Calu3 (cell line): ENCODE measurements at regions of chr9 and their contacts with region 1.

Region 1: DNA sequence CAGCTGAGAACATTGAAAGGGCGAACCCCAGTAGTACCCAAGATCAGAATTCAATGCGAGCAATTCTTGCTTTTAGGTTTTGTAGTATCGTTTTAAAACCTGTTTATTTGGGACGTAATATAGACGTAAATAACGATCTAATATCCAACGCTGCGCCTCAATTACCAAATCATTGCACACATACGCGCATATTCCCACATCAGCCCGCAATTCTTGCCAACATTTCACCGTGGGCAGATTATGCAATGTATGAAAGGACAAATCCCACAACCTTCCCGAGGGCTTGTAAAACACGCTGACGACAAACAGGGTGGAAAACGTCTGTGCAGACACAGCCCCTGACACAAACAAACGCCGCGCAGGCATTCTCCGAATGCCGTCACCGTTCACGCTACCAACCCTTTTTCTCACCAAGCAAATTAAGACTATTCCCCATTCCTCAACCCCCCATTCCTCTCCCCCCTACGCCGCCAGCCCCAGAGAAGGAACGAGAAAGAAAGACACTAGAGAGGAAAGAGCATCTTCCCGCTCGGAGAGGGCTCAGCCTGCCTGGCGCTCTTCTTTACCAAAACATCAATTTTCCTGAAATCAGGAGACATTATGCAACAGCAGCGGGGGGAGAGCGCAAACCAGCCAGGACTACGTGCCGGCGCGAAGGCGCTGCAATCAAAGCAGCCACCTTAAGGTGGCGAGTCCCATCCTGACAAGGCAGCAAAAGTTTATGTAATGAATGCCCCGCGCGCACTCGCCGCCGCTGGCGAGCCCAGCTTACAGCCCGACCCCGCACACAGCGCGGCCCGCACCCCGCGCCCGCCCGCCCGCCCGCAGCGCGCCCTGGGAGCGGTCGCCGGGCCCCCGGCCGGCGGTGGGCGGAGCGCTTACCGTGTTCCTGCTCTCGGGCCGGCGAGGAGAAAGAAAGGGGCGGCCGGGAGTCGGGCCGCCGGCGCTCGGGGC is 597 bp downstream of the NFIL3 start:
- DNase-seq: peak; percentile 61
- H3K4me3 Mint-ChIP-seq: peak overlapping the region; percentile 96
- H3K27ac Mint-ChIP-seq: peak overlapping the region; percentile 89
- H3K4me1 Mint-ChIP-seq: peaks cover 27% of the 10 kb centered on the region
- H3K27me3 Mint-ChIP-seq: no peaks in the 10 kb centered on the region
- CTCF ChIP-seq: no peak

Region 2: DNA sequence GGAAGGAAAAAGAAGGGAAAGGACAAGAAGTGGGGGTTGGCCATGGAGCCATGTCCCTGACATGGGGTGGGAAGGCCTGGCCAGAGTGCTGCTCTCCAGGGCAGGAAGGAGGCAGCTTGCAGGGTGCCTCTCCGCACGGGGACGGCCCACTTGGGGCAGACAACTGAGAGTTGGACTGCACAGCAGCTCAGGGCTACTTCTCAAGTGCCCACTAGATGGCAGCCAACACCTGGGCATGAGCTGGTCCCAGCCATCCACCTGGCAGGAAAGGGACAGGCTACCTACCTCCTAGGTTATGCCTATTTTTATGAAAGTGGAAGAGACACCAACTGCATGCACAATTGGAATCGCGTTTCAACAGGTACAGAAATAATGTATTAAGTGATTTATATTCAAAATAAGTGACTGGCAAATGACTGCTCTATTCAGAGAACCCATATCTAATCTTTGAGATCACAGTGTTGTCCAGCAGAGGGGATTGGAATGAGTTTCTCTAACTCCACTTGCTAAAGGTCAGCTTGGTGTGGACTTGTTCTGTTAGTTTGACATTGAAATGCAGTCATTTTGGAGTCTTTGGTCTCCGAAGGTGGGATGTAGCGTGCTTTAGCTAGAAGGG is 508.1 kb before region 1 on chr9:
- CTCF ChIA-PET with region 1: interaction called, 18 read pairs
- intact Hi-C with region 1: loop called (anchors 1 kb)
- DNase-seq: peak; percentile 74
- H3K4me3 Mint-ChIP-seq: no peak overlapping the region
- H3K27ac Mint-ChIP-seq: no peak overlapping the region
- H3K4me1 Mint-ChIP-seq: no peaks in the 10 kb centered on the region
- H3K27me3 Mint-ChIP-seq: no peaks in the 10 kb centered on the region
- CTCF ChIP-seq: peak; percentile 79

Region 3: GRCh38 chr9:90985631-90986030 is 437.4 kb before region 1 on chr9:
- CTCF ChIA-PET with region 1: interaction called, 8 read pairs
- intact Hi-C with region 1: loop called (anchors 2 kb)
- DNase-seq: no peak
- H3K4me3 Mint-ChIP-seq: no peak overlapping the region
- H3K27ac Mint-ChIP-seq: no peak overlapping the region
- H3K4me1 Mint-ChIP-seq: peaks cover 10% of the 10 kb centered on the region
- H3K27me3 Mint-ChIP-seq: no peaks in the 10 kb centered on the region
- CTCF ChIP-seq: no peak

Region 4: DNA sequence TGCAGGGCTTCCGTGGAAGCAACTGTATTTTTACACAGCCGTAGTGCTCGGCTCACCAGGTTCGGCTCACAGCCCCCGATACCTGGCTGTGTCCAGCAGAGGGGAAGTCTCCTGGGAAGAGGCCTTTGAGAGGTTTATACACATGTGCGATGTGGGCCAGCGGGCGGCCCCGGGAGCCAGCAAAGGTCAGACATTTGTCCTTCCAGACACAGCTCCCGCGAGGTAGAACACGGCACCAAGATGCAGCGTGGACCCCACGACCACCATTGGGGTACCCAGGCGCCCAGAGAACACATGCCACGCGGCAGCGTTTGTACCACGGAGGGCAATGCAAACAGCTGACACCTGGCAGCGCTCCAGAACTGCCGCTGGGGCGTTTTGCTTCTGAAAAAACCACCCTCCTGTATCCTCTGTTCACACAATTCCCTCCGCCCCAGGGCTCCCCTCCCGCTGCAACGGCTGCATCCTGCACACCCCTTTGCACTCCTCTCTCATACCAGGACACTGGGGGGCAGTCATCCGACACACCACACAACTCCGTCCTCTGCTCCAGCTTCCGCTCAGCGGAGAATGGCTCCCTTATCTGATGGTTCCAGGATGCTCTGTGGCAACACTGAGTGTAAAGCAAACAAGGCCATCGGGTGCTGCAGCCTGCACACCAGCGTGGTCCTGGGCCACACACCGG is 386.1 kb before region 1 on chr9:
- CTCF ChIA-PET with region 1: interaction called, 3 read pairs
- intact Hi-C with region 1: loop called (anchors 1 kb)
- DNase-seq: peak; percentile 79
- H3K4me3 Mint-ChIP-seq: peak overlapping the region; percentile 40
- H3K27ac Mint-ChIP-seq: peak overlapping the region; percentile 90
- H3K4me1 Mint-ChIP-seq: peaks cover 32% of the 10 kb centered on the region
- H3K27me3 Mint-ChIP-seq: no peaks in the 10 kb centered on the region
- CTCF ChIP-seq: peak; percentile 47

Region 5: DNA sequence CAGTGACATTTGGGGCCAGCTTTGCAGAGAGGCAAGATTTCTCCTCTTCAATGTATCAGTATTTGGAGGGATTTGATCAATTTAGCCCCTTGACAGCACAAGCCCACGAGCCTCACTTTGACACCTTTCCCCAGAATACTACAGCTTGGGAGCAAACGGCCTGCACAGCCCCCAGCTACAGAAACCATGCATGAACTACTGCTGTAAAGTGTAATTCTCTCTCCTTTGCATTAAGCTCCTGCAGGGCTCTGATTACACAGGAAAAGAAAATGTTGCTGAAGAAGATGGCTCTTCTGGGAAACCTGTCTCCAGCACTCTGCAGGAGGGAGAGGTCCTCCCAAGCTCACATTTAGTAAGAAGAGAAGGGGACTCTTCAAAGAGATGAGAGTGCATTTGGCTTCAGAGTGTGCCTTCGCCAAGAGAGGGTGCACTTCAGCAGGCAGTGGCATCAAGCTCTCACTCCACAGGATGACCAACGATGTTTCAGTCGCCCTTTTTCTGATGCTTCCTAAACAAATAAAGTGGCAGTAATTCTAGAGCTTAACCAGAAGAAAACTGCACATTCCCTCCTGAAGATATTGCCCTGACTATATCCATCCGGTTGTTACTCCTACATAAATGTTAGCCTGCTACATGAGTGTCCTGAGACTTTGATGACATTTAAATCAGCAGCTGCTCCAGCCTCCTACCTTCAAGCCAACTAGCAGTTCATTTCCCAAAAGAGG is 333.5 kb before region 1 on chr9:
- CTCF ChIA-PET with region 1: interaction called, 11 read pairs
- intact Hi-C with region 1: loop called (anchors 2 kb)
- DNase-seq: peak; percentile 37
- H3K4me3 Mint-ChIP-seq: no peak overlapping the region
- H3K27ac Mint-ChIP-seq: no peak overlapping the region
- H3K4me1 Mint-ChIP-seq: no peaks in the 10 kb centered on the region
- H3K27me3 Mint-ChIP-seq: no peaks in the 10 kb centered on the region
- CTCF ChIP-seq: no peak

Region 6: DNA sequence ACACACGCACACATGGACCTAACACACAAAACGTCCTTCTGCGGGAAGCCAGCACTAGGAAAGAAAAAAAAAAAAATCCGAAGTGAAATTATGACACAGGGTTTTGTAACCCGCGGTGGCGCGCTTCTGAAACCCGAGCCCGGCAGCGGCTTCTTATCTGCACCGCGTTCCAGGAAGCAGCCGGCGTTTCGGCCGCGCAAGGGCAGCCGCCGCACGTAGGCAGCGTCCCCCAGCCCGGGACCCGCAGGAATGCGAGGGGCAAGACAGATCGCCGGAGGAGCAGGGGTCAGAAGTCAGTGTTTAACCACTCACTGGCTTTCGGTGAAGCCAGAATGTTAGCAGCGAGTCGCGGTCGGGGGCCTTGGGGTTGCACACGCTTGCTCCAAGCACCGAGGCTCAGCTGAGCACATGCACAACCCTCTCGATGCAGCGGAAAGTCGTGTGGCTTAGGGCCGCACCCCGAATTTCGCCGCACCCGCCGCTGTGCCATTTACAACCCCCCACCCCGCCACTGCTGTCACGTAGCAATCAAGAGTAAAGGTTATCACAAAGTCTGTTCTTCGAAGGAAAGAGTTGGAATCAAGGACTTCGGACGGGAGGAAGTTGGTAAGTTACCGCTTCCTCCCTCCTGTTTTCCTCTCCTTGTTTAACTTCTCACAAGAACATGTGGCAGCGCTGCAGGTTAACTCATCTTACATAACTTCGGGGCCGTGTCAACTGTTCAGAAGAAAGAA is 229.2 kb before region 1 on chr9:
- CTCF ChIA-PET with region 1: interaction called, 4 read pairs
- intact Hi-C with region 1: loop called (anchors 5 kb)
- DNase-seq: peak; percentile 80
- H3K4me3 Mint-ChIP-seq: peak overlapping the region; percentile 66
- H3K27ac Mint-ChIP-seq: peak overlapping the region; percentile 89
- H3K4me1 Mint-ChIP-seq: peaks cover 30% of the 10 kb centered on the region
- H3K27me3 Mint-ChIP-seq: no peaks in the 10 kb centered on the region
- CTCF ChIP-seq: no peak

Region 7: DNA sequence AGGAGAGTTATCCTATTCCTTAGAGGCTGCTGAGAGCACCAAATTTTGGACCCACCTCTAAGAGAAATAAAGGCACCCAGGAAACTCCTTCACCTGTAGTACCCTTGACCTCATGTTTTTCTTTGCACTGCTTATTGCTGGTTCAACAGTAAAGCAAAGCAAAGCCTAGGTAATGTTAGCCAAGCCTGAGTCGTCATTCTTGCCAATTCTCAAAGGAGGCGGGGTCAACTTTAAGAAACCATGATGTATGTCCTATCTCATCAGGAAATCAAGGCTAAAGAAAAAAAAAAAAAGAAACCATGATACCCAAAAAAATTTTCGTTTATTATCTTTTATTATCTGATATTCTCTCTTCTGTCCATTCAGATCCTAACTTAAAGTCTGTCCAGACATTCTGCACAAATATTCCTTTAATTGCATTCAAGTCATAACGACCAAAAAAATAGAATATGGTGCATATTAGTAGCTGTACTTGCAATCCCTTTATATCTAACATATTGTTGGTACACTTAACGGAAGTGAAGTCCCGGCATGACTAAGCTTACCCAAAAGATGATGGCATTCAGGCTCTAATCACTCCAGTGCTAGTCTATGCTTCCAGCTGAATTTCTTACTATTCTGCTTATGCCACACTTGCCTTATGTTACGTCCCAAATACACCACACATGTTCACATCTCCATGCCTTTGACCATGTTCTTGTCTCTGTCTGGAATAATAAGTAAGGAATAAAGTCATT is 63.1 kb before region 1 on chr9:
- CTCF ChIA-PET with region 1: no interaction called
- intact Hi-C with region 1: loop called (anchors 10 kb)
- DNase-seq: no peak
- H3K4me3 Mint-ChIP-seq: peak overlapping the region; percentile 91
- H3K27ac Mint-ChIP-seq: no peak overlapping the region
- H3K4me1 Mint-ChIP-seq: peaks cover 26% of the 10 kb centered on the region
- H3K27me3 Mint-ChIP-seq: no peaks in the 10 kb centered on the region
- CTCF ChIP-seq: no peak